AG04449 (cell line): ENCODE measurements at regions of chr10 and their contacts with region 1.

Region 1: DNA sequence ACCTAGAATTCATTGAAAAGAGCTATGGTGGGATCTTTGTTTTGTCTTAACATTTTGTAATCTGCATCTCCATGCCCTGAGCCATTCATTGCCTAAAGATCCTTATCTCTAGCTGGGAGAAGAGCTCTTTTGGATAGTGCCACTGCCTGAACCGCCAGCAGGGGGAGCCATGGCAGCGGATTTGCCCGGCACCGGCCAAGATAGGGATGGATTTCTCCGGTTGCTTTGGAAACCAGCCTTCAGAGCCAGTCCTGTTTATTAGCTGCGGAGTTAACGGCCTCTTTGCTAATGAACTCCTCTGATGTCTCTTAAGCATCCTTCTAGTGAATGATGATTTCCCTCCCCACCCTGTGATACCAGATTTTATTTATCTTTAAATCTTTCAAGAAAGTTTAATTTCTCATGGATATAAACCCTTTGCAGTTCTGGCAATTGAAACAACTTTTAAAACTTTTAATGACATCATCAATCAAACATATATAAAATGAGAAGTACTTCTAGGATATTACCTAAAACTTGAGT is 58.2 kb upstream of the LYZL2 start:
- DNase-seq: no peak
- H3K4me3 ChIP-seq: no peak overlapping the region
- CTCF ChIP-seq: peak; percentile 86

Region 2: GRCh38 chr10:30671026-30671616 is 16.6 kb before region 1 on chr10:
- CTCF ChIA-PET with region 1: interaction called, 60 read pairs
- POLR2A ChIA-PET with region 1: no interaction called
- DNase-seq: peak; percentile 38
- H3K4me3 ChIP-seq: no peak overlapping the region; the same call in 1 of the 2 replicates
- CTCF ChIP-seq: peak; percentile 60

Region 3: DNA sequence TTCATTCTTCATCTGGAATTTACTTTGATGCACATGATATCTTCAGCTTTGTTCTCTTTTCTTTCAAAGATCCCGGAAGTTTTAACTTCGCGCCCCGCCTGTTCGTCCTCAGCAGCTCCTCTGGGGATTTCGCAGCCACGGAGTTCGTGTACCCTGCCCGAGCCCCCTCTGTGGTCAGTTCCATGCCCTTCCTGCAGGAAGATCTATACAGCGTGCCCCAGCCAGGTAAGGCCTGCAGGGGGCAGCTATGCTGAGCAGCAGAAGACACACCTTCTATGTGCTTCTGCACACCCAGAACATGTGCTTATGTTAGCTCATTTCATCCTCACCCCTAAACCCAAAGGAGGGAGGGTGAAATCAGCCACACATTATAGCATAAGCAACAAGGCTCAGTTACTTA is 21.5 kb after region 1 on chr10:
- CTCF ChIA-PET with region 1: interaction called, 10 read pairs
- POLR2A ChIA-PET with region 1: no interaction called
- DNase-seq: no peak
- H3K4me3 ChIP-seq: no peak overlapping the region
- CTCF ChIP-seq: no peak

Region 4: DNA sequence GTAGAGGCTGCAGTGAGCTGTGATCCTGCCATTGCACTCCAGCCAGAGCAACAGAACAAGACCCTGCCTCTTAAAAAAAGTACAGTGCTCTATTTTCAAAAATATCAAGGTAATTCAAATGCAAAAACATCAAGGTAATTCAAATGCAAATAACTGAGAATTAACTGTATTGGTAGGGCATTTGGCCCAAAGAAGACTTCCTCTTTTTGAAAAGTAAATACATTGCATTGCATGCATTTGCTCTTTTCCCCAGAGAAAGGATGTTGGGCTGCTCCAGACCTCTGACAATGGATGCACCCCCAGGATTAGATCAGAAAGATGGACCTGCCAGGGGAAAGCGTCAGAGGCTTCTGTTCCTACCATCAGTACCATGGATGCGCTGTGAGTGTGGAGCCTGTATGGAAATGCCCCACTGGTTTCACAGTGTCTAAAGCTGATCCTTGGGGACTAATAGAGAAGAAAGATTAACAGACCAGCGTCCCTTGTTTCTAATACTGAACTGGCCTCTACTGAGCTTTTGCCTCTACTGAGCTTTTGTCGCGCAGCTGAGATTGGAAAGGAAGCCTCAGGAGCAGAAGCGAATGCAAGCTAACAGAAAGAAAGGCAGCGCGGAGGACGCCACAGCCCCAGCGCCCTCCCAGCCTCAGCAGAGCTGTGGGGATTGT is 35.3 kb after region 1 on chr10:
- CTCF ChIA-PET with region 1: interaction called, 15 read pairs
- POLR2A ChIA-PET with region 1: no interaction called
- DNase-seq: no peak
- H3K4me3 ChIP-seq: no peak overlapping the region
- CTCF ChIP-seq: no peak

Region 5: DNA sequence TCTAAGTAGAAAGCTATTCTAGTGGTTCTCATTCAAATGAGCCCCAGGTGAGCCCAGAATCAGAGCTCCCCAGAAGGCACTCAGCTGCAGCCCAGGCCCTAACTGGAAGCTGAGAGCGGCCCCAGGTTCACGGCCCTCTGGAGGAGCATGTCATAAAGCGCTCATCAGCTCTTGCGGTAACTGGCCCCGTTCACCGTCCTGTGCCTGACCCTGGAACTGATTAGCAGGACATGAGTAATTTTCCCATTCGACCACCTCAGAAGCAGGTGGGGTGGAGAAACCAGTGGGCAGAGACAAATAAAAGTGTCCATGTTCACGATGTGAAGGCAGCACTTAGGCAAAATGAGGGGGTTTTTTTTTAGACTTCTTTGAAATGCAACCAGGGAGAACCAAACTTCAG is 77.9 kb after region 1 on chr10:
- CTCF ChIA-PET with region 1: no interaction called
- POLR2A ChIA-PET with region 1: no interaction called
- DNase-seq: no peak
- H3K4me3 ChIP-seq: no peak overlapping the region
- CTCF ChIP-seq: no peak

Region 6: DNA sequence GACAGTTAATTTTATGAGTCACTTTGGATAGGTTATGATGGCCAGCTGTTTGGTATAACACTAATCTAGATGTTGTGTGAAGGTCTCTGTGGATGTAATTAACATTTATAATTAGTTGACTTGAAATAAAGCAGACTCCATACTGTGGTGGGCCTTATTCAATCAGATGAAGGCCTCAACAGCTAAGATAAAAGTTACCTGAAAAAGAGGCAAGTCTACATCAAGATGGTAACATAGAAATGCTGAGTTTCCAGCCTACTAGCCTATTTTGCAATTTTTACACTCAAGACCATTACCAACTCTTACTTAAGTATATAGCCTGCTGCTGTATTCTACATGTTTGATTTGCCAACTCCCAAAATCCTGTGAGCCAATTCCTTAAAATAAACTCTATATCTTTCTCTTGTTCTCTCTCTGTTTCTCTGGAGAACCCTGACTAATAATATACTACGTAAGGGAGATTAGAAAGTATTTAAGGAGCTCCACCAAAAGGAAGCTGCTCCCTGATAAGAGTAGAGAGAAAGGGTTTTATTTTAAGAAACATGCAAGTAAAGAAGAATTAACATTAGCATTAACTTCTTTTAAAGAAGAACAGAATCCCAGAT is 301.2 kb after region 1 on chr10:
- CTCF ChIA-PET with region 1: no interaction called
- POLR2A ChIA-PET with region 1: no interaction called
- DNase-seq: no peak
- H3K4me3 ChIP-seq: no peak overlapping the region
- CTCF ChIP-seq: no peak

Region 7: GRCh38 chr10:31808258-31809218 is 1120.8 kb after region 1 on chr10:
- CTCF ChIA-PET with region 1: interaction called, 13 read pairs
- POLR2A ChIA-PET with region 1: no interaction called
- DNase-seq: peak; percentile 33
- H3K4me3 ChIP-seq: peak overlapping the region; percentile 27
- CTCF ChIP-seq: peak; percentile 8